ENCODE measurements at regions of chr12 and their contacts with region 1.

Region 1: GRCh38 chr12:75511116-75512048 is at the start of gene KRR1:
- DNase-seq: peak; percentile 95
- H3K4me3 Mint-ChIP-seq: peak within 1 kb of the TSS; percentile 99
- H3K27ac Mint-ChIP-seq: peak within 1 kb of the TSS; percentile 98
- H3K4me1 Mint-ChIP-seq: peaks cover 31% of the 10 kb centered on the region
- H3K27me3 Mint-ChIP-seq: no peaks in the 10 kb centered on the region
- total RNA-seq, gene KRR1: 96.6 to 106 TPM

Region 2: DNA sequence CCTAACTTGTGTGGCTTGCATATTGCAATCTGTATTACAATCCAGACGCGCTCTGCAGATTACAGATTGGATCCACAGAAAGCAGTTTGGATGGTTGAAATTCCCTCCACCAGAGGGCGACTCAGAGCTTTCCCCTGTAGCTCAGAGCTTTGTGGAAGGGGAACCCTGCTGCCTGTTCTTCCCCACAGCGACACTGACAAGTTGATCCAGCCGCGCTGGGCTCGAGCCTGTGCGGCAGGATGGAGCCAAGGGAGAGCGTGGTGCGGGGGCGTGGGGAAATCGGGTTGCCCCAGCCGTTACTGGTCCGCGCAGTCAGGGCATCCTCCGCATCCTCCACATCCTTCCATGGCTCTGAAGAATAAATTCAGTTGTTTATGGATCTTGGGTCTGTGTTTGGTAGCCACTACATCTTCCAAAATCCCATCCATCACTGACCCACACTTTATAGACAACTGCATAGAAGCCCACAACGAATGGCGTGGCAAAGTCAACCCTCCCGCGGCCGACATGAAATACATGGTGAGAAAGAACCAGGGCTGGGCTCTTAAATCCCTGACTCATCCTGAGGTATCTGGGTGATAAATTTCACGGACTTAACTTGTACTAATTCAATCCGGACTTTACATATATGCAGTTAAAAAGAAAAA is 176.9 kb before region 1 on chr12 and contains the start of gene GLIPR1L1:
- CTCF ChIA-PET with region 1: interaction called, 11 read pairs
- POLR2A ChIA-PET with region 1: no interaction called
- intact Hi-C with region 1: loop called (anchors 2 kb)
- DNase-seq: peak; percentile 88
- H3K4me3 Mint-ChIP-seq: peak within 1 kb of the TSS; percentile 59
- H3K27ac Mint-ChIP-seq: no peak within 1 kb of the TSS
- H3K4me1 Mint-ChIP-seq: peaks cover 22% of the 10 kb centered on the region
- H3K27me3 Mint-ChIP-seq: peaks cover 16% of the 10 kb centered on the region
- total RNA-seq, gene GLIPR1L1: not detected

Region 3: DNA sequence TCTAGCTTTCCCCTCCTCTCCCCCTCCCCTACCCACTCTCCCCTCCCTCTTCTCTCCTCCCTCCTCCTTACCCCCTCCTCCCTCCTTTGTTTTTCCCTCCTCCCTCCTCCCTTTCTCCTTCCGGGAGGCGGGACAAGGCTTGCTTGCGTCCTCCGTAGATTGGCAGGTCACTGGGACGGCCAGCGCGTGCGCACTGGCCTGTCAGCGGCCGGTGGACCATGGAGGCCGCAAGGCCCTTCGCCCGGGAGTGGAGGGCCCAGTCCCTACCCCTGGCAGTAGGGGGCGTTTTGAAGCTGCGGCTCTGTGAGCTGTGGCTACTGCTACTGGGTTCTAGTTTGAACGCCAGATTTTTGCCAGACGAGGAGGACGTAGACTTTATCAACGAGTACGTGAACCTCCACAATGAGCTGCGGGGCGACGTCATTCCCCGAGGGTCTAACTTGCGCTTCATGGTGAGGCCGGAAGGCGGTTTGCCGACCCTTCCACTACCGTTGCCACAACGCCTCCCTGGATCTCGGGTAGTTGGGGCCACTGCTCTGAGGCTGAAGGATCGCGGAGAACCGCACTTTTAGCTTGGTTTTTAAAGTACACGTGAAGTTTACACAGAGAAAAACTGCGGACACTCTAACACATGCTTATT is 120.4 kb before region 1 on chr12 and contains the start of gene GLIPR1L2:
- CTCF ChIA-PET with region 1: interaction called, 3 read pairs
- POLR2A ChIA-PET with region 1: interaction called, 4 read pairs
- intact Hi-C with region 1: loop called (anchors 1 kb)
- DNase-seq: peak; percentile 95
- H3K4me3 Mint-ChIP-seq: peak within 1 kb of the TSS; percentile 86
- H3K27ac Mint-ChIP-seq: peak within 1 kb of the TSS; percentile 93
- H3K4me1 Mint-ChIP-seq: peaks cover 40% of the 10 kb centered on the region
- H3K27me3 Mint-ChIP-seq: no peaks in the 10 kb centered on the region
- total RNA-seq, gene GLIPR1L2: 0.17 to 0.24 TPM

Region 4: DNA sequence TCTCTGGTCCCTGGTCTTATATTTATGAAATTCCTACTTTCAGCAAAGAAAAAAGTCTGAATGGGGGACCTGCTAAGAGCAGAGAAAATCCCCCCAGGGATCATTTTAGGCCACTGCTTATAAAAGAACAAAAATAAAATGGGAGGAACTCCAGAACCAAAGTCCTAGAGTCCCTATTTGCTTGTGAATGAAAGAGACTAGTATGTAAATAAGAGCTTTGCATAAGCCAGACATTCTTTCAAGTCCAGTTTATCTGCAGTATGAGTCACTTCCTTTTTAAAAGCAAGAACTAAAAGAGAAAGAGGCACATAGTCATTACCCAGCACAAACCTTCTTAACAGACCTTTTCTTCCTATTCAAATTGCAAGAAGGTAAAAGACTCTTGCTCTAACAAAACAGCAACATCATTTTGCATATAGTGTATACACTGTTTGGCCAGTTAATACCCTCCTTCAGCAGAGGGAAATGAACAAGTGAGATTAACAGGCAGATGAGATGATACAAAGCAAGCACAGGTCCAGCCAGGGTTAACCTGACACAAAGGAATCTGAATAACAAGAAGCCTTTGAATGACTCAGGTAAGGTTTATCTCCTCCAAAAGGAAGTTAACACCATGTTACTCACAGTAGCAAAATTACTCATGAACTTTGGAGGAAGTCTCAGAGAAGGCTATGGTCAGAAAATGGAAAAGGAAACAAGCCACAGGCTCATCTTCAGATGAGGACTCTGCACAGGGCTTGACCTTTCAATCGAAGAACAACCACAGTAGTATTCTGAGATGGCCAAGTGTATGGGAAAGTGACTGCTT is 432.9 kb after region 1 on chr12:
- CTCF ChIA-PET with region 1: no interaction called
- POLR2A ChIA-PET with region 1: no interaction called
- intact Hi-C with region 1: loop called (anchors 1 kb)
- DNase-seq: peak; percentile 42
- H3K4me3 Mint-ChIP-seq: peak overlapping the region; percentile 34
- H3K27ac Mint-ChIP-seq: peak overlapping the region; percentile 95
- H3K4me1 Mint-ChIP-seq: peaks cover 29% of the 10 kb centered on the region
- H3K27me3 Mint-ChIP-seq: no peaks in the 10 kb centered on the region

Region 5: DNA sequence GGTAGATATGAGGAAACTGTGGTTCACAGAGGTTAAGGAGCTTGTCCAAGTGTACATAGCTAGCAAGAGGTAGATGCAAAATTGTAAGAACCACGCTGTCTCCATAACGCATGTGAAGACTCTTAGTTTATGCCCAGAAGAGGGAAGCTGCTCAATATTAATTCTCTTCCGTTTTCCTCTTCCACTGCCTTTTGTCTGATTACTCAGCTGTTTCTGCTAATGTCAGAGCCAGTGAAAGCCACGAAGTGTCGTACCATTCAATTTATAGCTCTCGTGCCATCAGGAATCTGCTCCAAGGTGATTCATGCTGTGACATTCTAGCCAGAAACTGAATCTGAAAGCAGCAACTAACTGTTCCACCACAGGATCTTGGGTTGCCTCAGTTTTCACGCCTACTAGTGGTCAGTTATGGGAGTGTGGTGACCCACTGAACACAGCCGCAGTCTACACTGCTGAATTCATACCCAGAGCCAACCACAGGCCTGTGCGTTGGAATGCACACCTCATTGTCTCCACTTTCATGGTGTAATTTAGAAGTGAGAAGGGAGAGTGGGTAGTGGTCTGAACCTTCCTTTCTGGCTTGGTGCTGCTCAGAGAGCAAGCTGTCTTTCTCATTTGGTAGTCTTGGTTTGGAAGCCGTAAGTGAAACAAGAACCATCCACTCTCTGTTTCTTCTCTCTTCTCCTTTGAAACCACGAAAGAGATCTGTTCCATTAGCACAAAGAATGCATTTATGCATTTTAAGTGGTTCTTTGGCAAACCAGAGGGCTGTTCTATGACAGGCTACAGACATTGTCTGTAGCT is 647.3 kb after region 1 on chr12:
- CTCF ChIA-PET with region 1: no interaction called
- POLR2A ChIA-PET with region 1: no interaction called
- intact Hi-C with region 1: loop called (anchors 2 kb)
- DNase-seq: peak; percentile 91
- H3K4me3 Mint-ChIP-seq: peak overlapping the region; percentile 16
- H3K27ac Mint-ChIP-seq: peak overlapping the region; percentile 25
- H3K4me1 Mint-ChIP-seq: peaks cover 16% of the 10 kb centered on the region
- H3K27me3 Mint-ChIP-seq: peaks cover 12% of the 10 kb centered on the region